PC-3 (cell line): ENCODE measurements at regions of chr1 and their contacts with region 1.

Region 1: DNA sequence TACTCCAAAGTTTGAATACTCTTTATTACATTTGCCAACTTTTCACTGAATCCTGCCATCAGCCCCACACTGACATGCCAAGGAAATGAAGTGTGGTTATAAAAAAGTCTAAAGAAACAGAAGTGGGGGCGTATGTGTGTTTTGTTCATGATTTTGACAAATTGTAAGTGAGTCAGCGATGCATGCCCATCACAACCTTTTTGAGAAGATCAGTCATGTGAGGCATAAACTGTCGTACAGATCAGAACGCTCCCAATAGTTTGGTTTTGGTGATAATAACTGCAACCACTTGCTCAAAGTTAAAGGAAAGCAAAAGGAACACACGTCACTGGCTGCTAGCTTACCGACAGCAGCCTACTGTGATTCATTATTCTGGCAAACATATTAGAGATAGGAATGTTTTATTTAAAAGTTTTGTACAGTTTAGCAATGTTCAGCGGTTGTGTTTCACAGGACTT is 95.6 kb downstream of the RGS2 start:
- DNase-seq: peak; percentile 65
- ATAC-seq: peak; percentile 93
- H3K4me3 ChIP-seq: peak overlapping the region; percentile 57
- H3K27ac ChIP-seq: peak overlapping the region; percentile 69
- H3K4me1 ChIP-seq: peaks cover 14% of the 10 kb centered on the region
- H3K27me3 ChIP-seq: no peaks in the 10 kb centered on the region
- CTCF ChIP-seq: no peak

Region 2: DNA sequence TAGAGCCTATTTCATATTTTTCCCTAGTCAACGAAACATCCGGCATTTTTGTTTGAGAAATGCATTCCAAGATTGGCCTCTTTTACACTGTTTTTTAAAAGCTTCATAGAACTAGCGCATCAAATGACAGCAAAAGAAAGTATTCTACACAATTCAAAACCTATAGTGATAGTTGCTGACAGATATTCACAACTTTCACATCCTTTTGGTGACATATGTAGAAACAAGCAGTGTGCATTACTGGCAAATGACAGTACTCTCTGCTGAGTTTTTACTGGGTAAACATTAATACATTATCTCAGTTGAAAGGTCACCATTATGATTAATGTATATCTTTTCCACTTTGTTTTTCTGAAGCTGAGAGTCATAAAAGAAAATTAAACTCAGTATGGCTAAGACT is 881.6 kb before region 1 on chr1:
- CTCF ChIA-PET with region 1: no interaction called
- POLR2A ChIA-PET with region 1: no interaction called
- intact Hi-C with region 1: no loop called
- DNase-seq: no peak
- ATAC-seq: no peak
- H3K4me3 ChIP-seq: no peak overlapping the region
- H3K27ac ChIP-seq: no peak overlapping the region
- H3K4me1 ChIP-seq: no peaks in the 10 kb centered on the region
- H3K27me3 ChIP-seq: no peaks in the 10 kb centered on the region
- CTCF ChIP-seq: no peak

Region 3: DNA sequence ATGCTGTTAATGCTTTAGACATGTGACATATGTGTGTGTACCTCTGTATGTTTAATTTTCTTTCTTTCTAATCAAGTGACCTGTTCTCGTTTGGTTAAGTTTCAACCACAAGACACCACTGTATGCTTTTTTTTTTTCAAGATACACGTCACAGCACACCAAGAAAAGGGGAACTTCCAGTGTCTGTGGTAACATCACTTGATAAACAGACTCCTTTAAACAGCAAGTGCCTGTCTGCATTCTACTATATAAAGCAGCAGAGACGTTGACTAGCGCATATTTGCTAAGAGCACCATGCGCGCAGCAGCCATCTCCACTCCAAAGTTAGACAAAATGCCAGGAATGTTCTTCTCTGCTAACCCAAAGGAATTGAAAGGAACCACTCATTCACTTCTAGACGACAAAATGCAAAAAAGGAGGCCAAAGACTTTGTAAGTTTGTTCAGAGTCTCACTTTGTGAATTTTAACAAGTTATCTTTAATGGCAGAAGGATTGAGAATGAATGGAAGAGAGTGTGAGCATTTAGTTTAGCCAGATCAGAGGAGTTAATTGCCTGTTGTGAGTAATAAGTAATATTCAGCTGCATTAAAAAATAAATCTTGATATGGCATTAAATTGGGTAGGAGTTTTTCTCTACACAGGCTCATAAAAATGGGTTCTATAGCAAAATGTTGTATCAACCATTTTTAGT is 328.8 kb before region 1 on chr1 and contains the start of gene RGS1:
- CTCF ChIA-PET with region 1: no interaction called
- POLR2A ChIA-PET with region 1: no interaction called
- intact Hi-C with region 1: no loop called
- DNase-seq: no peak
- ATAC-seq: no peak
- H3K4me3 ChIP-seq: no peak within 1 kb of the TSS
- H3K27ac ChIP-seq: no peak within 1 kb of the TSS
- H3K4me1 ChIP-seq: peaks cover 4% of the 10 kb centered on the region; the same call in 1 of the 2 replicates
- H3K27me3 ChIP-seq: no peaks in the 10 kb centered on the region
- CTCF ChIP-seq: no peak
- total RNA-seq, gene RGS1: not detected in 2 replicates

Region 4: GRCh38 chr1:192604979-192605620 is 299.4 kb before region 1 on chr1:
- CTCF ChIA-PET with region 1: no interaction called
- POLR2A ChIA-PET with region 1: no interaction called
- intact Hi-C with region 1: no loop called
- DNase-seq: no peak
- ATAC-seq: no peak
- H3K4me3 ChIP-seq: no peak overlapping the region
- H3K27ac ChIP-seq: no peak overlapping the region
- H3K4me1 ChIP-seq: peaks cover 14% of the 10 kb centered on the region
- H3K27me3 ChIP-seq: no peaks in the 10 kb centered on the region
- CTCF ChIP-seq: no peak

Region 5: DNA sequence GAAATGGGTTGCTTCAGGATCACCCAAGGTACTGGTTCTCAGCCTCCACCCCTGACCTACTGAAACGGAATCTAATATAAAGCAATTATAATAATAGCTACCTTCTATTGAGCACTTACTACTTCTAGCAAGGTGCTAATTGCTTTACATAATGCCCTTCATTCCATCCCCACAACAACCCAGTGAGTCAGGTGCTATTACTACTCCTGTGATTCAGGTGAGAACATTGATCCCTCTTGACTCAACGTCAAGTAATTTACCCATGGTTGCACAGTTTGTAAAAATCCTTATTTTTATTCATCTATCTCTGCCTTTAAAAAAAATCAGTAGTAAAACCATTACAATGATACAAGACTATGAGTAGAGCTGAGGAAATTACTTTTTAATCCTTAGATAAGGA is 69.5 kb after region 1 on chr1:
- CTCF ChIA-PET with region 1: no interaction called
- POLR2A ChIA-PET with region 1: no interaction called
- intact Hi-C with region 1: loop called (anchors 2 kb)
- DNase-seq: no peak
- ATAC-seq: no peak
- H3K4me3 ChIP-seq: no peak overlapping the region
- H3K27ac ChIP-seq: no peak overlapping the region
- H3K4me1 ChIP-seq: peaks cover 5% of the 10 kb centered on the region; the same call in 1 of the 2 replicates
- H3K27me3 ChIP-seq: no peaks in the 10 kb centered on the region
- CTCF ChIP-seq: no peak